Ascending aorta (tissue), 2 donors: ENCODE measurements at regions of chr4 and their contacts with region 1.

Region 1: GRCh38 chr4:48546336-48546735 is 56.3 kb downstream of the ZAR1 start:
- DNase-seq: no peak
- H3K4me3 ChIP-seq: no peak overlapping the region
- H3K27ac ChIP-seq: no peak overlapping the region
- H3K4me1 ChIP-seq: no peaks in the 10 kb centered on the region
- H3K27me3 ChIP-seq: no peaks in the 10 kb centered on the region
- CTCF ChIP-seq: peak in 2 of 3 experiments; percentile 31 to 52

Region 2: DNA sequence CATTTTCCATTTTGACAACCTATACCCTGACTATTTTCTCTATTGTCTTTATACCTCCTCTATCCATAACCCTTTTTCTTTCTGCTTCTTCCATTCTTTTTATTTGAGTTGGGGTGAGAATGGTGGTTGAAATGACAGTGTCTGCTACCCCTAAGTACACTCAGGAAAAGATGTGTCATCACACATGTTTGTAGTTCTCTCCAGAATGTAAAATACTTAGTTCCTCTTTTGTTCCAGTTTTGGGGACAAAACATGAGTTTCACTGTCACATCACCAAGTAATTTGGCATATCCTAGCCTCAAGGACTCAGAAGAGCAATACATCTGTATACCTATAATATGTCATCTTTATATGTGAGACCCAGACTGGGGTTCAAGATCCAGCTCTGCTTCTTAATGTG is 1173.2 kb before region 1 on chr4:
- intact Hi-C with region 1: no loop called
- DNase-seq: no peak
- H3K4me3 ChIP-seq: no peak overlapping the region
- H3K27ac ChIP-seq: no peak overlapping the region
- H3K4me1 ChIP-seq: no peaks in the 10 kb centered on the region
- H3K27me3 ChIP-seq: no peaks in the 10 kb centered on the region
- CTCF ChIP-seq: no peak

Region 3: GRCh38 chr4:48445704-48446103 is 100.6 kb before region 1 on chr4:
- intact Hi-C with region 1: loop called (anchors 5 kb)
- DNase-seq: no peak
- H3K4me3 ChIP-seq: no peak overlapping the region
- H3K27ac ChIP-seq: no peak overlapping the region
- H3K4me1 ChIP-seq: no peaks in the 10 kb centered on the region
- H3K27me3 ChIP-seq: no peaks in the 10 kb centered on the region
- CTCF ChIP-seq: peak; percentile 19 to 63 (median 58)

Region 4: DNA sequence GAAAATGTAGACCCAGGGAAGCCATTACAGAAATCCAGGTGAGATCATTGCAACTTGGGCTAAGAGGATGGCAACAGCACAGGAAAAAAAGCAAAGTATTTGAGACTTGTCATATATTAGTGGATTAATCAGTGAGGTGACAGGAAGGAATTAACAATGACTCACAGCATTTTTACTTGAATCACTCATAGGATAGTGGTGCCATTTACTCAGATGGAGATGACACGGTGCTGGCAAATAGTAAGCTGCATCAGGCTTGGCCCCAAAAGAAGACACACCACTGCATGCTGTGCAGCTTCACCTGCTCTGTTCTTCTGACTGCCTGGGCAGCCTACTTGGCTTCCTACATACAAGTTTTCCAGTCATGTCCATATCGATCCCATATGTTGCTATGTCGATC is 89.0 kb after region 1 on chr4:
- intact Hi-C with region 1: no loop called
- DNase-seq: no peak
- H3K4me3 ChIP-seq: no peak overlapping the region
- H3K27ac ChIP-seq: no peak overlapping the region
- H3K4me1 ChIP-seq: peaks cover 0 to 11% of the 10 kb centered on the region in 2 donors
- H3K27me3 ChIP-seq: no peaks in the 10 kb centered on the region
- CTCF ChIP-seq: no peak

Region 5: DNA sequence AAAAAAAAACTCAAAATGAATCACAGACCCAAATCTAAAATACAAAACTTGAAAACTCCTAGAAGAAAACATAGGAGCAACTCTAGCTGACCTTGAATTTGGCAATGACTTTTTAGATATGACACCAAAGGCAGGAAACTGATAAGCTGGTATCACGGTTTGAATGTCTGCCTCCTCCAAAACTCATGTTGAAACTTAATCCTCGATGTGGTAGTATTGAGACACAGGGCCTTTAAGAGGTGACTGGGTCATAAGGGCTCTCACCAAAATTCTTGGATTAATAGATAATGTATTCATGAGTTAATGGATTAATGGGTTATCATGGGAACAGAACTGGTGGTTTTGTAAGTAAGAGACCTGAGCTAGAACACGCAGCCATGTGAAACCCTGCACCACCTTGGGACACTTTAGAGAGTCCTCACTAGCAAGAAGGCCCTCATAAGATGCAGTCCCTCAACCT is 193.3 kb after region 1 on chr4:
- intact Hi-C with region 1: no loop called
- DNase-seq: no peak
- H3K4me3 ChIP-seq: no peak overlapping the region
- H3K27ac ChIP-seq: no peak overlapping the region
- H3K4me1 ChIP-seq: peaks cover 0 to 7% of the 10 kb centered on the region in 2 donors
- H3K27me3 ChIP-seq: no peaks in the 10 kb centered on the region
- CTCF ChIP-seq: no peak